T-cell (primary cell): ENCODE measurements at regions of chr7 and their contacts with region 1.

Region 1: GRCh38 chr7:87173471-87173870 is 21.2 kb downstream of the DMTF1 start:
- DNase-seq: no peak
- ATAC-seq: no peak
- H3K4me3 ChIP-seq: no peak overlapping the region
- H3K4me3 Mint-ChIP-seq: no peak overlapping the region
- H3K27ac ChIP-seq: no peak overlapping the region
- H3K27ac Mint-ChIP-seq: peak overlapping the region; percentile 55 to 62
- H3K4me1 ChIP-seq: no peaks in the 10 kb centered on the region
- H3K4me1 Mint-ChIP-seq: peaks cover 31 to 37% (median 35%) of the 10 kb centered on the region in 3 donors
- H3K27me3 ChIP-seq: no peaks in the 10 kb centered on the region
- H3K27me3 Mint-ChIP-seq: no peaks in the 10 kb centered on the region

Region 2: GRCh38 chr7:87188930-87189329 is 15.5 kb after region 1 on chr7:
- CTCF ChIA-PET with region 1: interaction called in 1 of 2 experiments, 3 read pairs
- POLR2A ChIA-PET with region 1: interaction called in 1 of 2 experiments, 13 read pairs
- DNase-seq: no peak
- ATAC-seq: no peak
- H3K4me3 ChIP-seq: no peak overlapping the region
- H3K4me3 Mint-ChIP-seq: no peak overlapping the region
- H3K27ac ChIP-seq: no peak overlapping the region
- H3K27ac Mint-ChIP-seq: peak overlapping the region in 1 of 2 donors; percentile 8
- H3K4me1 ChIP-seq: no peaks in the 10 kb centered on the region
- H3K4me1 Mint-ChIP-seq: peaks cover 36 to 49% (median 37%) of the 10 kb centered on the region in 3 donors
- H3K27me3 ChIP-seq: no peaks in the 10 kb centered on the region
- H3K27me3 Mint-ChIP-seq: no peaks in the 10 kb centered on the region